ENCODE measurements at regions of chr4 and their contacts with region 1.

Region 1: DNA sequence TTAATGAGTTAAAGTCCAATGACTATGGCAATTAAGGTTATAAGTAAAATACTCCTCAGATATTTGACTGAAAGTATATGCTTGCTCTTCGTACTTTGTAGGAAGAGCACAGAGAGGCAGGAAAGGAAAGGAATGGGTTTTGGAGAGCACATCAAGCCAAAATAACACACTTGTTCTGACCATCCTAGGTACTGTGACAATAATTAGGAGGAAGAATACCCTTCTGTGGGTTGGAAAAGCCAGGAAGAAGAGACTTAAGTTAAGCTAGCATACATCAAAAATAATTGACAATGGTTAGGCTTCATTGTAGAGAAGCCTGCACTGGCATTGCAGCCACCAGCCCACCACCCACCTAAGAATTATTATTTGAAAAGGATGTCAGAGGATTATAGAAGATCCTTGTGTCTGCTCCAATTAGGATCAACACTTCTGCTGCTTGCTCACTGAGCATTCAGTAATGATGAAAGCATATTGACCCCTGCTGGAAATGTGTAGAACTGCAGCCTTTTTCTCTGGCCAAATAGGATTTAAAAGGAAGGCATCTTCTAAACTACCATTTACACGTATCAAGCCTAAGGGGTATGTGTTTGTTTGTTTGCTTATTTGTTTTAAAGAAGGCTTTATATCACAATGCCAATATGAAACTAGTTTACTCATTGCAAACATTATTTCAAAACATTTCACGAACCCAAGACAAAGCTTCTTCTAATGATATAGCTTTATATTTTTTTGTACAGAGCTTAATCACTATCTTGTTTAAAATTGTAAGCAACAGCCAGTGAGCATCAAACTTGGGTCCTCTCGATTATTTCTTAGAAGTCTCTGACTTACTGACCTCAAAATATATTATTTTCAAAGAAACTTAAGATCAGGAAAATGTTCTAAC is 286.2 kb upstream of the TET2 start:
- DNase-seq: peak; percentile 63
- ATAC-seq: peak; percentile 82
- H3K4me3 ChIP-seq: no peak overlapping the region
- H3K27ac ChIP-seq: no peak overlapping the region
- H3K4me1 ChIP-seq: no peaks in the 10 kb centered on the region
- H3K27me3 ChIP-seq: no peaks in the 10 kb centered on the region
- CTCF ChIP-seq: peak; percentile 71
- POLR2A ChIP-seq: no peak
- RAD21 ChIP-seq: peak; percentile 69

Region 2: DNA sequence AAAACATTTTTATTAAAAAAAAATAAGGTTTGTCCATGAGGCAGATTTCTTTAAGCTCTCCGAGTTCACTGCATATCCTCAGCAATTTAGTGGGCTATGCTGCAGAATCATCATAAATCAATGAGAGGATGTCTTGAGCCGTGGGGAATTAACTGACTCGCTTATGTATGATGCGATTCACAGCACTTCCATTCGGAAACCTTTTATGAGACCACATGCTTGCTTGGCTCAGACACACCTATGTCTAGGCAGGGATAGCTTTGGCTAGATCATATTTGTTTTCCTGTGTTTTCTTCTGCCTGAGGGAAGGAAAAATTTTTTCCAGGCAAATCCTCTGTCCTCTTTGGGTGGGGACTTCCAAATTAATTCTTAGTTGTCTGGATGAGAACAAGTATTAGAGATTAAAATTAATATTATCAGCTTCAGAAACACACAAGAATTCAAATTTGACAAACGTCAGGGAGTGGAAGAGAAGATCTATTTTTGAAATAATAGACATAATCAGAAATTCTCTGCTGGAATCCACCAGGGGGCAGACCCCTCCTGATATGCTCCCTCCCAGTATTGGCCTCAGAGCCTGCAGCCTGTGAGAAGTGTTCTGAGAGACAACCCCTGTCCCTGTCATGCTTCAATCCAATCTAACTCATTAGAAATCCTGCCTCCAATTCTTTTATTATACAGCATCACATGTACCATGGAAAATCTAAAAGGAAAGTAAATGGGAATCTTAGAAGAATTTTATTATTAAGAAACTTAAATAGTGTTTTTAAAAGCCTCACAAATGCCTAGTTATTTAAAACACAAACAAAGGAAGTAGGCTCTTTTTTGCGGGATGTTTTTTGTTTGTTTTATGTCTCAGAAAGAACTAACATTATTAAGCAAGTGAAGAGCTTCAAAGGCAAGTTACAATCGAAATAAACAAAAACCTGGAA is 795.6 kb before region 1 on chr4:
- CTCF ChIA-PET with region 1: no interaction called
- POLR2A ChIA-PET with region 1: no interaction called
- dilution Hi-C with region 1: no loop called
- in situ Hi-C with region 1: no loop called
- intact Hi-C with region 1: loop called (anchors 2 kb)
- DNase-seq: no peak
- ATAC-seq: no peak
- H3K4me3 ChIP-seq: no peak overlapping the region
- H3K27ac ChIP-seq: no peak overlapping the region
- H3K4me1 ChIP-seq: no peaks in the 10 kb centered on the region
- H3K27me3 ChIP-seq: no peaks in the 10 kb centered on the region
- CTCF ChIP-seq: no peak; the same call in 1 of the 2 replicates
- POLR2A ChIP-seq: no peak
- RAD21 ChIP-seq: no peak

Region 3: DNA sequence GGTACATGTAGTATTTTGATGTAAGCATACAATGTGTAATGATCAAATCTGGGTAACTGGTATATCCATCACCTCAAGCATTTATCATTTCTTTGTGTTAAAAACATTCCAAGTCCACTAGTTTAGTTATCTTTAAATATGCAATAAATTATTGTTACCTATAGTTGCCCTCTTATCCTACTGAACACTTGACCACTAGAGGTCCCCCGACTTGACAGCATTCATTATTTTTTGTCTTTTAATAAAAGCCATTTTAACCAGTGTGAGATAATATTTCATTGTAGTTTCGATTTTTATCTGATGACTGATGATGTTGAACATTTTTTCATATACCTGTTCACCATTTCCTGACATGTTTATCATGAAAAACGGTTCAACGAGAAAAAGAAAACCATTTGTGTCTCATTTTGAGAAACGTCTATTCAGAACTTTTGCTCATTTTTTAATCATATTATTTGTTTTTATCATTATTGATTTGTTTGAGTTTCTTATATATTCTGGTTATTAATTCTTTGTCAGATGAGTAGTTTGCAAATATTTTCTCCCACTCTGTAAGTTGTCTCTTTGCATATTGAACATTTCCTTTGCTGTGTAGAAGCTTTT is 166.8 kb before region 1 on chr4:
- CTCF ChIA-PET with region 1: no interaction called
- POLR2A ChIA-PET with region 1: no interaction called
- dilution Hi-C with region 1: no loop called
- in situ Hi-C with region 1: no loop called
- intact Hi-C with region 1: loop called (anchors 2 kb)
- DNase-seq: peak; percentile 21
- ATAC-seq: no peak
- H3K4me3 ChIP-seq: no peak overlapping the region
- H3K27ac ChIP-seq: no peak overlapping the region
- H3K4me1 ChIP-seq: no peaks in the 10 kb centered on the region
- H3K27me3 ChIP-seq: no peaks in the 10 kb centered on the region
- CTCF ChIP-seq: peak; percentile 31; the same call in 1 of the 2 replicates
- POLR2A ChIP-seq: no peak
- RAD21 ChIP-seq: no peak

Region 4: DNA sequence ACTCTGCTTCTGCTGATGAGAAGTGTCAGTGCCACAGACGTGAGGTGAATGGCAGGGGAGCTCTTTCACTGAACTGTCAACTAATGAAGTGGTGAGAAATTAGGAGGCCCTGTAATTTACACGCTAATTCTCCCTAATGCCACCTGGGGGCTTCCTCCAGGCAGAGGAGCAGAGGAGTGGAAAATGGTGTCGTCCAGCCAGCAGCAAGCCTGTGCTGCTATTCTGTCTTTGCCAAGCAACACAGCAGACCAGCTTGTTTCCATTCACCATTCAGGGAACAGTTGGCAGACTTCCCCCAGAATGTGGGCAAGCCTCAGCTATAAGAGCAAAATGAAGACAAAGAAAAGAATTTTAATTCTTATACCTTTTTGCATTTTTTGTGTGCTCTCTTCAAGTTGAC is 41.0 kb after region 1 on chr4:
- CTCF ChIA-PET with region 1: no interaction called
- POLR2A ChIA-PET with region 1: no interaction called
- dilution Hi-C with region 1: no loop called
- in situ Hi-C with region 1: no loop called
- intact Hi-C with region 1: no loop called
- DNase-seq: no peak
- ATAC-seq: no peak
- H3K4me3 ChIP-seq: no peak overlapping the region
- H3K27ac ChIP-seq: no peak overlapping the region
- H3K4me1 ChIP-seq: no peaks in the 10 kb centered on the region
- H3K27me3 ChIP-seq: no peaks in the 10 kb centered on the region
- CTCF ChIP-seq: no peak
- POLR2A ChIP-seq: no peak
- RAD21 ChIP-seq: no peak